ENCODE measurements at regions of chr12 and their contacts with region 1.

Region 1: DNA sequence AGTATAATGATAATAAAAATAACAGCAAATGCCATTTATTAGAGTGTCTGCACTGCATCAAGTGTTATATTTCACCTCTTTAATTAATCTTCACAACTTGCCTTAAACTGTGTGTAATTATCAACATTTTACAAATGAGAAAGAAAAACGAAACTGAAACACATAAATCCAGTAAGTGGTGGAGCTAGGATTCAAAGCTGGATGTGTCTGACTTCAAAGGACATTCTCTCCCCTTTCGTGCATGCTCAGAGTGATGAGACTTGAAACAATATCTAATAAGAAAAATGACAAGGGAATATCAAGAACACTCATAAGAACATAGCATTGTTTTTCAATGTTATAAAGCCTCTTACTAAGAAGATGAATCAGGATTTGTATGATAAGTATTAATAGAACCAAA is 78.8 kb downstream of the DUSP6 start:
- DNase-seq: no peak
- H3K4me3 ChIP-seq: no peak overlapping the region
- H3K27ac ChIP-seq: no peak overlapping the region
- H3K4me1 ChIP-seq: no peaks in the 10 kb centered on the region
- H3K27me3 ChIP-seq: no peaks in the 10 kb centered on the region
- CTCF ChIP-seq: no peak

Region 2: DNA sequence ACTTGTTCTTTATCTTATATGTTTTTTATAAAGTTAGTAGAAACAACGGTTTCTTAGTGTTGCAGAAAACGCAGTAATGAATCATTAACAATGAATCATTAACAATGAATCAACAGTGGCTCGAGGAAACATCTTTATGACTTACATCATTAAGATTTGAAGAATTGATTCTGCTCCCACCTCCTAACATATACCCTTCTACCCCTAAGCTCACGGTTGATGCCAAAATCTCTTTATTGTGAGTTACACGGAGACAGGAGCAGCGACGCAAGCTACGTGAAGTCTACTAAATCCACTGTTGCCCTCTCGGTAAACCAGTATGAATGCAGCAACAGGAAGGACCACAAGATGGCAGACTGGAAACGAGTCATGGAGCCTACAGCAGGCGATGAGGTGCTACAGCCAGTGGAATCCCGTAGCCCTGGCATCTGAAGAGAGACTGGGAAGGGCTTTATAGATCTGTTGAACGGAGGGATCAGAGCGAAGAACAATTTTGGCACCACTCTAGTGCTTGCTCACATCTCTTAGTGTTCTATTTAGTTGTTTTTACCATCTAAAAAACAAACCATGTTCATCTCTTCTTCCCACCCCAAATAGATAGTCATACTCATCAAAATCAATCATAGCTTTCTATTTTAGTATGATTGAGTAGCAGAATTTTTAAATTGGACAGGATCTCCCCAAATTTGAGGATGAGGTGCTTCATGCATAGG is 254.0 kb before region 1 on chr12:
- CTCF ChIA-PET with region 1: no interaction called
- dilution Hi-C with region 1: no loop called
- in situ Hi-C with region 1: no loop called
- intact Hi-C with region 1: no loop called
- DNase-seq: peak; percentile 81
- H3K4me3 ChIP-seq: peak overlapping the region; percentile 18 to 49 (median 36)
- H3K27ac ChIP-seq: peak overlapping the region; percentile 57
- H3K4me1 ChIP-seq: peaks cover 16% of the 10 kb centered on the region
- H3K27me3 ChIP-seq: no peaks in the 10 kb centered on the region
- CTCF ChIP-seq: peak; percentile 92 to 93

Region 3: DNA sequence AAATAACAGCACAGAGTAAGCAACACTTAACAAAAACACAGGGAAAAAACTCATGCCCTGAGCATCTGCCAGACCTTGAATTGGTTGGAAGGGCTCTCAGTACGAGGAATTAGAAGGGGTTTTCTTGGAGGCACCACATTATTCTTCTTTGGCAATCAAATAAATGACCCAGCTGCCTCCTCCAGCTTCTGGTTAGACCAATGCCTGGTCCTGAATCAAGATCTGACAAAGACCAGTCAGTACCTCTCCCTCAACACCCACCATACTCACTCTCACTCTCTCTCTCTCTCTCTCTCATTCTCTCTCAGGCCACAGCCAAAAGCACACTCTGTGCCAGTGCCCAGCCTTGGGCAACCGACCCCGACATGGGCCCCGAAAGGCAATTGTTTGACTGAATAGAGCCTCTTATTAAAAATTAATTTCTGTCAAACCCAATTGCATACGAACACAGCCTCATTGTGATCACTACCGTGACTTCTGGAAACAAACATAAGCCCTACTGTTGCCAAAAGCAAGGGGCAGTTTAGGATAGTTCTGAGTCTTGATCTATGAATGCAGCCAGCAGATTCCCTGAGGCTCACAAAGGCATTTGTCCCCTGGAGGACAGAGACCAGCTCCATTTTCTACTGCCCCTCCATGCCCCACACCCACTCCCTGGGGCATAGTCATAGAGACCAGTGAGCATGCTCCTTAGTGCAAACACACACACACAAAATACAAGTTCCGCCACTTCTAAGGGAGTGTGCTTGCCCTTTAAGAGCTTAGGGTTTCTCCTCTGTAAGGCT is 54.9 kb after region 1 on chr12:
- CTCF ChIA-PET with region 1: no interaction called
- dilution Hi-C with region 1: loop called (anchors 5 kb)
- in situ Hi-C with region 1: no loop called
- intact Hi-C with region 1: no loop called
- DNase-seq: no peak
- H3K4me3 ChIP-seq: no peak overlapping the region
- H3K27ac ChIP-seq: no peak overlapping the region
- H3K4me1 ChIP-seq: no peaks in the 10 kb centered on the region
- H3K27me3 ChIP-seq: no peaks in the 10 kb centered on the region
- CTCF ChIP-seq: no peak